Sciatic nerve (tissue), 2 donors: ENCODE measurements at regions of chr19 and their contacts with region 1.

Region 1: DNA sequence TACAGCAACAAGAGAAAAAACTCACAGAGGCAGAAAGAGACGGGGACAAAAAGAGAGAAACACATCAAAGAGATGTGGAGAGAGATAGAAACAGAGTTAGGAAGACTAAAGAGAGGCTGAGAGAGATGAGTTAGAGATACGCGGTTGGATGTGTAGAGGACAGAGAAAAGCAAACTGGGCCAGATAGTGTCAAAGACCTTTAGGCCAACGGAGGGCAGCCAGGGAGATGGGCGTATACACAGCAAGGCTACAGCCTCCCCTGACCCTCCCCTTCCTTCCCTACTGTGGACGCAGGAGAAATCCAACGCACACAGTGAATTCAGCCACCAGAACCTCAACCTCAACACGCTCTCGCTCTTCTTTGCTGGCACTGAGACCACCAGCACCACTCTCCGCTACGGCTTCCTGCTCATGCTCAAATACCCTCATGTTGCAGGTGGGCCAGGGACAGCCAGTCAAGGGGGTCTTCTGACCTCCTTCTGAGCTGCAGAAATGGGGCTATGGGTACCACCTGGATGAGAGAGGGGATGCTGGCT is 18.7 kb downstream of the CYP2B6 start:
- DNase-seq: no peak
- ATAC-seq: no peak

Region 2: DNA sequence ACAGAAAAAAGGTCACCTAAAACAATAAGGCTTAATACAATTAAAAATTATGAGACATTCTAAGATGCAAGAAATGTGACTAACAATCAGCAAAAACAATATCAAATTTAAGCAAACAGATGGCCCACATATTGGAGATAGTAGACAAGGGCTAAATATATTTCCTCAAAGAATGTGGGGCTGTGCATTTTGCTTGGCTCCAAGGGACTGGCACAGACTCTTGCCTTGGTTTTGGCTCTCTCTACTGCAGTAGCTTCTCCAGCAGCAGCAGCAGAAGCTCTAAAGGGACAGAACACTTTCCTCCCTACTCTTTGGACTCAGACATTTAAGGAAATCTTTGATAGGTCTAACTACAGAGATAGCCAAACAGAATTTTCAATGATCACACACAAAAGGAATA is 880.8 kb before region 1 on chr19:
- intact Hi-C with region 1: loop called (anchors 5 kb)
- DNase-seq: no peak
- ATAC-seq: no peak

Region 3: GRCh38 chr19:40777937-40778705 is 231.6 kb before region 1 on chr19 and contains the start of gene RAB4B:
- intact Hi-C with region 1: no loop called
- DNase-seq: peak; percentile 100
- ATAC-seq: peak; percentile 97
- total RNA-seq, gene RAB4B: 29.5 TPM

Region 4: GRCh38 chr19:41238244-41238643 is 228.5 kb after region 1 on chr19:
- intact Hi-C with region 1: no loop called
- DNase-seq: no peak
- ATAC-seq: no peak